SK-N-SH (cell line): ENCODE measurements at regions of chr19 and their contacts with region 1.

Region 1: DNA sequence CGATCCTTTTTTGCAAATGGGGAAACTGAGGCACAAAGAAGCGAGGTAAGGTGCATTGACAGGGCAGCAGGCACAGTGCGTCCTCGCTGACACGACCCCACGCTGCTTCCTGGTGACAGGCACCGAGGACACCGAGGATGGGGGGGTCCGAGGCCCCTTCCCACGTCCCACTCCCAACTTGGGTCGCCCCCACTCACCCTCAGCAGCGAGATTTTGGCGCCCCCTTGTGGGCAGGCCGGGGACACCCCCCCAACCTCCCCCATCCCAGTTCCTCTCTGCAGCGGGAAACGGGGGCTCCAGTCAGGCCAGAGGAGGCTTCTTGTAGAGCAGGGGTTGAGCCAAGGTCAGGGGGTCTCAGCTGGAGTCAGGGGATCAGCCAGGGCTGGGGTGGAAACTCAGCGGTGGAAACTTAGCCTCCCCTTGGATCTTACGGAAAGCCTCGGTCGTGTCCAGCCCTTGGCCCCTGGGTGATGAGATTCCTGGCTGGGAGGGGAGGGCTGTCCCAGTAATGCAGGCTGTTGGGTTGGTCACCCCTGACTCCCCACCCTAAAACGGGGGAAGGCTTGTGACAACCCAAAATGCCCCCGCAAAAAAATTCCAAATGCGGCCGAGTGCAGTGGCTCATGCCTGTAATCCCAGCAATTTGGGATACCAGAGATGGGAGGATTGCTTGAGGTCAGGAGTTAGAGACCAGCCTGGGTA is 8.2 kb downstream of the SMIM24 start:
- DNase-seq: peak; percentile 87
- H3K4me3 ChIP-seq: peak overlapping the region in 1 of 2 experiments; percentile 32; a peak in 1 of 4 replicates
- H3K27ac ChIP-seq: no peak overlapping the region
- H3K4me1 ChIP-seq: peaks cover 0 to 2% of the 10 kb centered on the region in 2 experiments; a peak in 1 of 4 replicates
- H3K27me3 ChIP-seq: no peaks in the 10 kb centered on the region; the same call in 1 of the 2 replicates
- CTCF ChIP-seq: peak; percentile 90
- EP300 ChIP-seq: no peak
- RAD21 ChIP-seq: peak; percentile 71

Region 2: DNA sequence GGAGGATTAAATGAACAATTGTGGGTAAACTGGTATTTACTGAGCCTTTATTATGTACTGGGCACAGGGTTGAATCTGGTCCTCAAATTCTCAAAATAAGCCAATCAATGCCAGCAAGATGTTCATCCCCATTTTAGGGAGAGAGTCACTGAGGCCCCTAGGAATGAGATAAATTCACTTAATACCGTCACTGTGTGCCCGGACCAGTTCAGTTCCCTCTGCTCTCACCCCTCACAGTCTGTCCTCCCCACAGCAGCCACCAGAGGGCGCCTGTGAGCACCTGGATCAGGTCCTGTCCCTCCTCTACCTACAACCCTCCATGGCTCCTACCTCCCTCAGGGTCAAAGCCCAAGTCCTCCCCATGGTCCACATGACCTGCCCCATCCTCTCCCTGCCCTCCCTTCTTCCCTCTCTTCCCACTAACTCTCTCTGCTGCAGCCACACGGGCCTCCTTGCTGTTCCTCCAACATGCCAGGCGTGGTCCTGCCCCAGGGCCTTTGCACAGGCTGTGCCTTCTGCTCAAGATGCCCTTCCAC is 147.7 kb before region 1 on chr19:
- CTCF ChIA-PET with region 1: interaction called, 41 read pairs
- POLR2A ChIA-PET with region 1: interaction called, 3 read pairs
- DNase-seq: peak; percentile 74
- H3K4me3 ChIP-seq: no peak overlapping the region
- H3K27ac ChIP-seq: no peak overlapping the region
- H3K4me1 ChIP-seq: no peaks in the 10 kb centered on the region
- H3K27me3 ChIP-seq: peaks cover 15% of the 10 kb centered on the region; the same call in 1 of the 2 replicates
- CTCF ChIP-seq: peak; percentile 80
- EP300 ChIP-seq: no peak
- RAD21 ChIP-seq: peak; percentile 33

Region 3: DNA sequence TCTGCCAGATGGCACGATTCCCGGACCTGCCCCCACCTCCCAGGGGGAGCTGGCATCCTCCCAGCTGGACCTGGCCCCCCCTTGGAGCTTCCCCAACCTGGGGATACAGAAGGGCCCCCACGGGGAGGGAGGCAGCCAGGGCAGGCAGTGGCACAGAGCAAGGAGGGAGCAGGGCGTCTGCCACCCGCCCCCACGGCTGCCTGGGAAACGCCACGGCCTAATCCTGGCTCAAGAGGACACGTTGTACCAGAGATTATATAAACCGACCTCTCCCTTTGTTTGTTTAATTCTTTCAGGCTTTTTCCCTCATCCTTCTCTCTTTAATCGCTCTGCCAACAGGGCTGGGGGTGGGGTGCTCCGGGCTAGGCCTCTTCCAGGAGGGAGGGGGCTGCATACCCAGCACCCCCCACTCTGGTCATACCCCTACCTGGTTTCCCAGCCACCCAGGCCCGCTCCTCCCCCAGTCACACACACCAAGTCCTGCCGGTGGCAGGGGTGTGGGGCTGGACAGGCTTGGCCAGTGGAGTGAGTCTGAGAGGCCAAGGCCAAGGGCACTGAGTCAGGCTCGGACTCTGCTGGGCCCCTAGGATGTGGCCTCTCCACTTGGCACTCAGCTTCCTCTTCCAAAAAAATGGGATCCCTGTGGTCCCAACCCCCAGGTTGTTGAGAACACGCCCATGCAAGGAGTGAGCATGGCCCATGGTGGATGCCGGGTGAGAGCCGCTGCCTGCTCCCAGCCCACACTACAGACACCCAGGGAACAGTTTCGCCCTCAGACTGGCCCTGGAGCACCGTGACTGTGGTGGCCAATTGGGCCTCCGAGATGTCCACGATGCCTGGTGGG is 135.2 kb before region 1 on chr19:
- CTCF ChIA-PET with region 1: interaction called, 15 read pairs
- POLR2A ChIA-PET with region 1: no interaction called
- DNase-seq: peak; percentile 76
- H3K4me3 ChIP-seq: no peak overlapping the region
- H3K27ac ChIP-seq: peak overlapping the region; percentile 40 to 83
- H3K4me1 ChIP-seq: peaks cover 7 to 23% of the 10 kb centered on the region in 2 experiments; a peak in 3 of 4 replicates
- H3K27me3 ChIP-seq: no peaks in the 10 kb centered on the region
- CTCF ChIP-seq: no peak
- EP300 ChIP-seq: 0 out of 4 replicates have a peak, but pooled peaks of 1 of the 2 experiments have one; percentile 26
- RAD21 ChIP-seq: no peak

Region 4: DNA sequence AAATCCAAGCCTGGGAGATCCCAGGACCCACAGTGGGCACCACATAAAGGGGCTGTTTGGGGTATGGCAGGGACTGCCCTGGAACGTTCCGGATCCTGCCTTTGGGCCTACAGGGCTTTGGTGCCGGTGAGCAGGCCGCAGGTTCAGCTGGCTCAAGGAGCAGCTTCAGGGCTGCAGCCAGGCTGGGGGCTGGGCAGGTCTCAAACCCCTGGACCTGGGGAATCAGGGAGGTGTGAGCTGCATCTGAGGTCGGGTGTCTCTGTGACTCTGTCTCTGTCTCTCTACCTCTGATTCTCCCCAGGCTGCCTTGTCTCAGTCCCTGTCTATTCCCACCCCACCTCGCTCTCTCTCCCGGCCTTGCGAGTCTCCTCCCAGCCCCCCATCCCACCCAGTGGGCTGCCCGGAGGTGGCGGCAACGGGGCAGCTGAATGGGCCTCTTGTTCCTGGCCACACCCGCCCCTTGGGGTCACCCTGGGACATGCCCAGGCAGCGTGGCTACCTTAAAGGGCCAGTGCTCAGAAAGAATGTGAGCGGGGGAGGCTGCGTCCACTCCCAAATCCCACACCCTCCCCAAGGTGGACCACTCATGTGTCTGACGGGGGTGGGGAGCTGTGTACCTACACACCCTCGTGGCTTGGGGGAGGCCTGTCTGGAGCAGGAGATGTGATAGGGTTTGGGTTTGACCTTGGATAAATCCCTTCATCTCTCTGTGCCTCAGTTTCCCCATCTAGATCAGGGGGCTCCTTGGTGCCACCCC is 74.7 kb before region 1 on chr19:
- CTCF ChIA-PET with region 1: no interaction called
- POLR2A ChIA-PET with region 1: no interaction called
- DNase-seq: peak; percentile 47
- H3K4me3 ChIP-seq: no peak overlapping the region
- H3K27ac ChIP-seq: no peak overlapping the region; a peak in 1 of 4 replicates
- H3K4me1 ChIP-seq: peaks cover 0 to 2% of the 10 kb centered on the region in 2 experiments; a peak in 1 of 4 replicates
- H3K27me3 ChIP-seq: no peaks in the 10 kb centered on the region
- CTCF ChIP-seq: no peak
- EP300 ChIP-seq: no peak
- RAD21 ChIP-seq: no peak

Region 5: GRCh38 chr19:3448616-3449334 is 23.3 kb before region 1 on chr19:
- CTCF ChIA-PET with region 1: interaction called, 10 read pairs
- POLR2A ChIA-PET with region 1: no interaction called
- DNase-seq: no peak
- H3K4me3 ChIP-seq: no peak overlapping the region
- H3K27ac ChIP-seq: peak overlapping the region in 1 of 2 experiments; percentile 97; a peak in 2 of 4 replicates
- H3K4me1 ChIP-seq: peaks cover 0 to 13% of the 10 kb centered on the region in 2 experiments; a peak in 1 of 4 replicates
- H3K27me3 ChIP-seq: no peaks in the 10 kb centered on the region
- CTCF ChIP-seq: no peak
- EP300 ChIP-seq: no peak
- RAD21 ChIP-seq: no peak

Region 6: GRCh38 chr19:3642987-3643673 is 171.0 kb after region 1 on chr19:
- CTCF ChIA-PET with region 1: no interaction called
- POLR2A ChIA-PET with region 1: no interaction called
- DNase-seq: peak; percentile 78
- H3K4me3 ChIP-seq: no peak overlapping the region
- H3K27ac ChIP-seq: no peak overlapping the region
- H3K4me1 ChIP-seq: no peaks in the 10 kb centered on the region
- H3K27me3 ChIP-seq: no peaks in the 10 kb centered on the region
- CTCF ChIP-seq: no peak
- EP300 ChIP-seq: no peak
- RAD21 ChIP-seq: no peak